GM10248 (cell line): ENCODE measurements at regions of chr6 and their contacts with region 1.

Region 1: GRCh38 chr6:41051873-41052272 is 1.1 kb upstream of the APOBEC2 start:
- DNase-seq: no peak
- CTCF ChIP-seq: no peak

Region 2: GRCh38 chr6:40930555-40930954 is 121.3 kb before region 1 on chr6:
- CTCF ChIA-PET with region 1: no interaction called
- POLR2A ChIA-PET with region 1: no interaction called
- DNase-seq: no peak
- CTCF ChIP-seq: no peak

Region 3: GRCh38 chr6:41039060-41039998 is 12.5 kb before region 1 on chr6 and contains the start of gene UNC5CL:
- CTCF ChIA-PET with region 1: interaction called, 85 read pairs
- POLR2A ChIA-PET with region 1: no interaction called
- DNase-seq: peak; percentile 76
- CTCF ChIP-seq: peak; percentile 82